ENCODE measurements at regions of chr18 and their contacts with region 1.

Region 1: DNA sequence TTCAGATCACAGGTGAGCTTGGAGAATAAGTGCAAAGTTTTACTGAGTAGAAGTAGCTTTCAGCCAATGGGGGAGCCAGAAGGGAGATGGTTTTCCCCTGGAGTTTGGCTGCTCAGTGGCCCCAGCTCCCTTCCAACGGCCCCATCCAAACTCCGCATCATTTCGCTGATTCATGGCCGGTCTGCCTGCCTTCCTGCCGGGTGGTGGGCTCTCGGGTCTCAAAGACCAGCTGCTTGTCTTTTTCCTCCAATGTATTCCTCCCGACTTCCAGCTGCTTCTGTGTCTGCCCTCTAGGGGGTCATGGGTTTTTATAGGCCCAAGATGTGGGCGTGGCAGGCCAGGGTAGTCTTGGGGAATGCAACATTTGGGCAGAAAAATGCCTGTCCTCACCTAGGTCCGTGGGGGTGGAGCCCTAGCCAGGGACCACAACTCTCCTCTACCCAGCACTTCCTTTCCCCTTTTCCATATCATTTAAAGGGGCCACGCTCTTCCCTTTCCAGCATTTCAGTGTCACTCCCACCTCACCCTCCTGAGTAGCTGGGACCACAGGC is 73.5 kb downstream of the MEX3C start:
- H3K4me3 ChIP-seq: no peak overlapping the region
- H3K27ac ChIP-seq: no peak overlapping the region
- H3K4me1 ChIP-seq: no peaks in the 10 kb centered on the region
- CTCF ChIP-seq: no peak

Region 2: DNA sequence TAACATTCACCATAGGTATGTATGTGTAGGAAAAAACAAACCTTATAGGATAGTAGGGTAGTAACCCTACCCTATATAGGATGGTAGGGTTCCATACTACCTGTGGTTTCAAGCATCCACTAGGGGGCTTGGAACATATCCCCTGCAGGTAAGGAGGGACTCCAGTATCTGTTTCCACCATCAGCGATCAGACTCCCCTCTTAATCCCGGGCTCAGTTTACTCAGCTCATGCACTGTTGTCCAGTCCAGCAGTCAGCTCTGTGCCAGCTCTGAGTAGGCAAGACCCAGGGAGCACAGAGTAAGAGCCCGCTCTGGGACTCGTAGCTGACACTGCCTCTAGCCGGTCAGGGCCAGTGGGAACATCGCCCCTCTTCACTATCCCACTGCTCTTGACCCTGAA is 11.8 kb after region 1 on chr18:
- CTCF ChIA-PET with region 1: interaction called, 11 read pairs
- POLR2A ChIA-PET with region 1: interaction called, 3 read pairs
- H3K4me3 ChIP-seq: no peak overlapping the region
- H3K27ac ChIP-seq: no peak overlapping the region
- H3K4me1 ChIP-seq: 0 out of 2 replicates have a peak, but pooled peaks cover 3% of the 10 kb centered on the region
- CTCF ChIP-seq: peak; percentile 40; the same call in 1 of the 2 replicates

Region 3: DNA sequence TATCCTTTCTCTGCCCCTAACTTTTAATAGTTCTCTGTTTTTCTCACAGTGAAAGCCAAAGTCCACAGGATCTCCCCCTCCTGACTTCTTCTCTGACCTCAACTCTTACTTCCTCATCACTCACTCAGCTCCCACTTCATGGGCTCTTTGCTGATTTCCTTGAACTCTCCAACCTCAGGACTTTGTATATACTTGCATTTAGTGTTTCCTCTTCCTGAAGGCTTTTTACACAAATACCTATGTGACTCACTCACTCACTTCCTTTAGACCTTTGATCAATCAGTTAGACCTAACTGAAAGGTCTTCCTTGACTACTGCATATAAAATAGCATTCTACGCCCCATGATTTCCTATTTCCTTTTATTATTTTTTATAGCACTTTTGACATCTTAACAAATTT is 306.5 kb after region 1 on chr18:
- CTCF ChIA-PET with region 1: no interaction called
- POLR2A ChIA-PET with region 1: no interaction called
- H3K4me3 ChIP-seq: no peak overlapping the region
- H3K27ac ChIP-seq: no peak overlapping the region
- H3K4me1 ChIP-seq: no peaks in the 10 kb centered on the region
- CTCF ChIP-seq: no peak